Thyroid gland (tissue), 4 donors: ENCODE measurements at regions of chr17 and their contacts with region 1.

Region 1: DNA sequence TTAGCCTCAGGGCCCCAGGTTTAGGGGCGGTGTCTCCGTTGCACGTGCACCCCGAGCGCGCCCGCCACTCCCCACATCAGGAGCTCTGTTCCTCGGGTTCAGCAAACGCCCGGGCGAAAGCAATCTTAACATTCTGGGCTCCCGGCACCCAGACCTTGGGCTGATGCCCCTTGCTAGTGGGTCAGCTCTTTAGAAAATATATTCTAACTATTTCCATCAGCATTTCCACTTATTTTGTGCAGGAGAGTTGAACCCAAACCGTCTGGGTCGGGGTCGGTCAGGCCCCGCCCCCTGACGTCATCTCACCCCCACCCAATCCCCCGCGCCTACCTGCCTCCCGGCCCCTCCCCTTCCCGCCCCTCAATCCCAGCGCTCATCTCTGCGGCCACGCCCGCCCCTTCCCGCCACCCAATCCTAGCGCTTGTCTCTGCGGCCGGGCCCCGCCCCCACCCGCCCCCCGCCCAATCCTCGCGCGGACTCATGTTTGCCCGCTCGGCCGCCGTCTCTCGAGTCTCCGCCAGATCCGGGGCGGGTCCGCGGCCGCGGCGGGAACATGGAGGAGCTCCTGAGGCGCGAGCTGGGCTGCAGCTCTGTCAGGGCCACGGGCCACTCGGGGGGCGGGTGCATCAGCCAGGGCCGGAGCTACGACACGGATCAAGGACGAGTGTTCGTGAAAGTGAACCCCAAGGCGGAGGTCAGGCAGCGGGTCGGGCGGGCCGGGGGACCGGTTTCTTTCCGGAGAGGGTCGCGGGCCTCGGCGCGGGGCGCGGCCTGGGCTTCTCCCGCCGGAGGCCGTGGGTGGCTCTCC is at the start of gene FN3KRP:
- DNase-seq: peak; percentile 97
- H3K4me3 ChIP-seq: peak within 1 kb of the TSS; percentile 75 to 93 (median 88)
- H3K27ac ChIP-seq: peak within 1 kb of the TSS in 1 of 3 donors; percentile 27
- H3K4me1 ChIP-seq: peaks cover 14 to 17% of the 10 kb centered on the region in 2 donors
- H3K27me3 ChIP-seq: no peaks in the 10 kb centered on the region
- CTCF ChIP-seq: no peak
- POLR2A ChIP-seq: peak in 1 of 2 donors; percentile 50
- total RNA-seq, gene FN3KRP: 9.3 to 122 (median 16.2) TPM

Region 2: DNA sequence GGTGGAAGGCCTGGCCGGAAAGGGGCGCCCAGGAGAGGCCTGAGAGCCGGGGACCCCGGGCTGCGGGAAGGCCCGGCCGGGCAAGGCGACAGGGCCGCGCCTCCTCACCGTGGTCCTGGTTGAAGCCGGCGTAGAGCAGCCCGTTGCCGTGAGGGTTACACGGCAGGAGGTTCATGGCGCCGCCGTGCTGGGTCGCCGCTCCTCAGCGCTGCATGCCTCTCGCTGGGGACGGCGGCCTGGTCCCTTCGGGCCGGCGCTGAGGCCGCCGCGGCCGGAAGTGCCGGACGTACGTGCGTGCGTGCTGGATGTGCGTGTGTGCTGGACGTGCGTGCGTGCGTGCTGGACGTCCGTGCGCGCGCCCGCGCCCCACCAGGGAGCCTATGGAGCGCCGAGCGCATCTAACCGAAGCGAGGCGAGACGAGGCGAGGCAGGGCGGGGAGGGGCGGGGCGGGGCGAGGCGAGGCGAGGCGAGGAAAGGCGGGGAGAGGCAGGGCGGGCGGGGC is 68.2 kb before region 1 on chr17 and contains the start of gene WDR45B:
- intact Hi-C with region 1: loop called (anchors 5 kb)
- DNase-seq: peak; percentile 96
- H3K4me3 ChIP-seq: peak within 1 kb of the TSS; percentile 46 to 100 (median 98)
- H3K27ac ChIP-seq: peak within 1 kb of the TSS; percentile 78 to 99 (median 97)
- H3K4me1 ChIP-seq: peaks cover 13 to 14% of the 10 kb centered on the region in 2 donors
- H3K27me3 ChIP-seq: no peaks in the 10 kb centered on the region
- CTCF ChIP-seq: no peak
- POLR2A ChIP-seq: peak; percentile 77 to 91
- total RNA-seq, gene WDR45B: 79.3 to 95.9 (median 84.2) TPM

Region 3: DNA sequence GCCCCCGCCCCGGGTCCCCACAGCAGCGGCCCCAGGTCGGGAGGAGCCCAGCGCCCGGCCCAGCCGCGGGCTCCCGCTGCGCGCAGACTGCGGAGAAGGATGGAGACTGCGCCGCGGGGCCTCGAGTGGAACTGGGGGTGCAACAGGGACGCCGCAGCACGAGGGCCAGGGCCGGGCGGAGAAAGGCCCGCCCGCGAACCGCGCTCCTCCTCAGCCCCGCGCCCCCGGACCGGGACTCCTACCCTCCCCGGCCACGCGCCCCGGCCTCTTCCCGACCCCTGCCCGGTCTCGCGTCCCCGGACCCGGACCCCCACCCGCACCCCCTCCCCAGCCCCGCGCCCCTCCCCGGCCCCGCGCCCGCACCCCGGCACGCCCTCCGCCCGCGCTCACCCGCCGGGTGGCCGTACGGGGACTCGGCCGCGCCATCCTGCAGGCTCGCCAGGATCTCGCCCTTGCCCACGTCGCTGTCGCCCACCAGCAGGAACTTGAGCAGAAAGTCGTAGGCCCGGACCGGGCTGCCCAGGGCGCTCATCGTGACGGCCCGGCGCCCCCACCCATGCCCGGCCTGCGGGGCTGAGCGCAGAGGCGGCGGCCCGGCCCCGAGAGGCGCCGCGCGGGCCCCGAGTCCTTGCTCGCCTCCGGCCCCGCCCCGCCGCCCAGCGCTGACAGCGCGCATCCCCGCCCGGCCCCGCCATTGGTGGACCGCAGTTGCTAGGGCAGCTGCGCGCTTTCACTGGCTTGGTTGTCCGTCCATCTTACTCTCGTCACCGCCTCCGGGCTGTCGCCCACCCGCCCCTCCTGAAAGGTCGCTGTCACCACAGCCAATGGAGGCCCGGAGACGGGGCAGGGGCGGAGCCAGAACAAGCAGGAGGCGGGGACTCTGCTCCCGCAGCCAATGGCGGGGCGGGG is 18.1 kb before region 1 on chr17 and contains the start of gene RAB40B:
- intact Hi-C with region 1: loop called (anchors 2 kb)
- DNase-seq: peak; percentile 99 to 100
- H3K4me3 ChIP-seq: peak within 1 kb of the TSS; percentile 39 to 80 (median 65)
- H3K27ac ChIP-seq: no peak within 1 kb of the TSS
- H3K4me1 ChIP-seq: peaks cover 7 to 16% of the 10 kb centered on the region in 2 donors
- H3K27me3 ChIP-seq: no peaks in the 10 kb centered on the region
- CTCF ChIP-seq: no peak
- POLR2A ChIP-seq: peak in 1 of 2 donors; percentile 65
- total RNA-seq, gene RAB40B: 6.2 to 19.3 (median 11.3) TPM

Region 4: DNA sequence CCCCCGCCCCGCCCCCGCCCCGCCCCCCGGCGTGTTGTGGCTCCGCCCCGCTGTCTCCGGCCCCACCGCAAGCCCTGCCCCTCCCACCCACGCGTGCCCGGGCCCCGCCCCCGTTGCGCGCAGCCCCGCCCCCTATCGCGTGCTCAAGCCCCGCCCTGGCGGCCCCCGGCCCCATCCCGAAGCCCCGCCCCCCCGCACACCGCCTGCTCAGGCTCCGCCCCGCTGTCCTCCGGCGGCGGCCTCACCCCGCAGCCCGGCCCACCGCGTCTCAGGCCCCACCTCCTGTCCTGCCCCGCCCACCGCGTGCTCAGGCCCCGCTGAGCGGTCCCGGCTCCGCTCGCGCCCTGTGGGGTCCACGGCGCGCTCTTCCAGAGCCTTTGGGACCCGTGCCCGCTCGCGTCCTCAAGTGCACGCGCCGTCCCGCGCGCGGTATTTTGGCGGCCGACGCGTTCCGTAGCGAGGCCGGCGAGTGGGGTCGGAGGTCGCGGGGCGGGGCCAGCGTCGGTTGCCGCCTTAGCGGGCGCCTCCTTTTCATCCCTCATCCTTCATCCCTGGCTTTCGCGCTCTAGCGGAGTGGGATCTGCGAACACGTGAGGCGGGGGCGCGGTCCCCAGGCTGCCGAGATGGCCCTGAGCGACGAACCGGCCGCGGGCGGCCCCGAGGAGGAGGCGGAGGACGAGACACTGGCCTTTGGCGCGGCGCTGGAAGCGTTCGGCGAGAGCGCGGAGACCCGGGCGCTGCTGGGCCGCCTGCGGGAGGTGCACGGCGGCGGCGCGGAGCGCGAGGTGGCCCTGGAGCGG is 35.4 kb after region 1 on chr17 and contains the start of gene TBCD:
- intact Hi-C with region 1: loop called (anchors 5 kb)
- DNase-seq: peak; percentile 88 to 90
- H3K4me3 ChIP-seq: peak within 1 kb of the TSS; percentile 77 to 96 (median 82)
- H3K27ac ChIP-seq: peak within 1 kb of the TSS; percentile 71 to 78 (median 78)
- H3K4me1 ChIP-seq: peaks cover 8 to 11% of the 10 kb centered on the region in 2 donors
- H3K27me3 ChIP-seq: no peaks in the 10 kb centered on the region
- CTCF ChIP-seq: peak in 1 of 6 experiments; percentile 21
- POLR2A ChIP-seq: peak in 1 of 2 donors; percentile 48
- total RNA-seq, gene TBCD: 72.6 to 85.9 (median 79.6) TPM

Region 5: DNA sequence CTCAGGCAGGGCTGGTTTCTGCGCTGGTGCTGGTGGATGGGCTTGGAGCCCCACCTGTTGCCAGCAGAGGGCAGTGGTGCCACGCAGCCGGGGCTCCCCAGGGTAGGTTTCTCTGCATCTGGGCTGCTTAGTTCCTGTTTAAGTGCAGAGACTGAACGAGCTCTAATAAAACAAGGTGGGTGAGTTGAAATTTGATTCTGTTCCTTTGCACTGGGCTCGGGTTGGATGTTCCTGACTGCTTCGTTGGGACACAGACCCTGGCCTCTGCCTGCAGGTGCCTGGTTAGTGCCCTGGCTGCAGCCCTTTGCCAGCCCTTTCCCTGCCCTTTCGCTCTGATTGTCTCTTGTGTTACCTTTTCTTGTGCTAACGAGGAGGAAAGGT is 65.5 kb after region 1 on chr17:
- intact Hi-C with region 1: no loop called
- DNase-seq: peak; percentile 86 to 89
- H3K4me3 ChIP-seq: no peak overlapping the region
- H3K27ac ChIP-seq: peak overlapping the region in 2 of 3 donors; percentile 43 to 56
- H3K4me1 ChIP-seq: peaks cover 5 to 8% of the 10 kb centered on the region in 2 donors
- H3K27me3 ChIP-seq: no peaks in the 10 kb centered on the region
- CTCF ChIP-seq: peak; percentile 95 to 99 (median 98)
- POLR2A ChIP-seq: no peak